Activated CD4-positive, alpha-beta T cell treated with anti-CD3 and anti-CD28 coated beads for 36 hours (primary cell): ENCODE measurements at regions of chr15 and their contacts with region 1.

Region 1: GRCh38 chr15:93018580-93018979 is 70.4 kb downstream of the RGMA start:
- DNase-seq: no peak
- ATAC-seq: no peak
- H3K4me3 Mint-ChIP-seq: no peak overlapping the region
- H3K27ac Mint-ChIP-seq: peak overlapping the region; percentile 80
- H3K4me1 Mint-ChIP-seq: peaks cover 71% of the 10 kb centered on the region
- H3K27me3 Mint-ChIP-seq: no peaks in the 10 kb centered on the region

Region 2: DNA sequence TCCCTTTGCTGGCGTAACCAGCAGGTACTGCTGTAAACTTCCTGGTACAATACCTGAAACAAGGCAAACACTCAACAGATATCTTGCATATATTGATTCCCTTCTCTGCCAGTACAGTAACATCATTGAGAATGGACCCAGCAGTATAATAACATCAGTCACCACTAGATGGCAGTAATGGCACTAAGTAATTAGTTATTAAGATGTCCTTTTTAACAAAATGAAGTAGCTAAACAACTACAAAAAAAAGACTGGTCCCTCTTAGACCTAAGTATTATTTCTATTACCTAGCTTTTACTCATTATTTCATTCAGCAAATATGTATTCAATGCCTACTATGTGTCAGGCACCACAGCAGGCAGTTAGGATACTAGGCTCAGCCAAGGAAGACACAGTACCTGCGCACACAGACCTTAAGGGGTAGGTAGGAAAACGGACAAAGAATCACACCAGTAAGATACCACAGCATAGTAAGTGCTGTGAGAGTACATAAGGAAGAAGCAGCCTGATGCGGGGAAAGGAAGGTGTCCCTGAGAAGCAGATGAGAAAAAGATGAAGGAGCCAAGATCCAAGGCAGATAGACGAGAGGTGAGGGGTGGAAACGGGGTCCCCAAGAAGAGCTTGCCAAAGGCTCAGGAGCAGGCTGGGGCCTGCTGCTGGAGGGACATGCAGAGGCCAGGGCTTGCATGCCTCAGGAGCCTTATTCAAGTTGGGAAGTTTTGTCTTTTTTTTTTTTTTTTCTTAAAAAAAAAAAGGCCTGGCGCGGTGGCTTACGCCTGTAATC is 221.2 kb before region 1 on chr15:
- CTCF ChIA-PET with region 1: interaction called, 10 read pairs
- POLR2A ChIA-PET with region 1: no interaction called
- intact Hi-C with region 1: loop called in 1 of 2 experiments (anchors 1 kb)
- DNase-seq: no peak
- ATAC-seq: peak; percentile 90
- H3K4me3 Mint-ChIP-seq: no peak overlapping the region
- H3K27ac Mint-ChIP-seq: peak overlapping the region; percentile 65
- H3K4me1 Mint-ChIP-seq: peaks cover 8% of the 10 kb centered on the region
- H3K27me3 Mint-ChIP-seq: no peaks in the 10 kb centered on the region

Region 3: DNA sequence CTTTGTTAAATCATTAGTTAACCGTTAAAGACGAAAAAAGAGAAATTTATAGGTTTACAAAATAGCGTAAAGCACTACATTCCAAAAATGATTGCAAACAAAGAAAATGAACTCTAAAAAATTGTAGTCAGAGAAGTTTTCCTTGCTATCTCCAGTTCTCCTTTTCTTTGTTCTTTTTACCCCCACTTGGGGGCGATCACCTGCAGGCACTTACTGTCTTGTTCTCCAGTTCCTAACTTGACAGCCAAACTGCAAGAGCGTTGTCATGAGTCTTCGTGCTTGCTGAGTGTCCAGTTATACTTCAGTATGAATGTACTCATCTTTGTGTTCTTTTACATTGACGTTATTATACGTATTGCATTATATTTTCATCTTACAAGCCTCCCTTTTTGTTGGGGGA is 64.0 kb before region 1 on chr15:
- CTCF ChIA-PET with region 1: interaction called, 5 read pairs
- POLR2A ChIA-PET with region 1: no interaction called
- intact Hi-C with region 1: loop called (anchors 2 to 5 kb)
- DNase-seq: peak; percentile 28
- ATAC-seq: no peak
- H3K4me3 Mint-ChIP-seq: no peak overlapping the region
- H3K27ac Mint-ChIP-seq: no peak overlapping the region
- H3K4me1 Mint-ChIP-seq: peaks cover 33% of the 10 kb centered on the region
- H3K27me3 Mint-ChIP-seq: no peaks in the 10 kb centered on the region